ENCODE measurements at regions of chr3 and their contacts with region 1.

Region 1: GRCh38 chr3:190224863-190225692 is 97.2 kb downstream of the CLDN1 start:
- DNase-seq: no peak
- ATAC-seq: no peak

Region 2: GRCh38 chr3:190321789-190322603 is 96.9 kb after region 1 on chr3 and contains the start of gene CLDN1:
- intact Hi-C with region 1: loop called (anchors 5 to 10 kb)
- DNase-seq: peak; percentile 86
- ATAC-seq: peak; percentile 90 to 94
- total RNA-seq, gene CLDN1: 4.4 to 4.5 TPM

Region 3: DNA sequence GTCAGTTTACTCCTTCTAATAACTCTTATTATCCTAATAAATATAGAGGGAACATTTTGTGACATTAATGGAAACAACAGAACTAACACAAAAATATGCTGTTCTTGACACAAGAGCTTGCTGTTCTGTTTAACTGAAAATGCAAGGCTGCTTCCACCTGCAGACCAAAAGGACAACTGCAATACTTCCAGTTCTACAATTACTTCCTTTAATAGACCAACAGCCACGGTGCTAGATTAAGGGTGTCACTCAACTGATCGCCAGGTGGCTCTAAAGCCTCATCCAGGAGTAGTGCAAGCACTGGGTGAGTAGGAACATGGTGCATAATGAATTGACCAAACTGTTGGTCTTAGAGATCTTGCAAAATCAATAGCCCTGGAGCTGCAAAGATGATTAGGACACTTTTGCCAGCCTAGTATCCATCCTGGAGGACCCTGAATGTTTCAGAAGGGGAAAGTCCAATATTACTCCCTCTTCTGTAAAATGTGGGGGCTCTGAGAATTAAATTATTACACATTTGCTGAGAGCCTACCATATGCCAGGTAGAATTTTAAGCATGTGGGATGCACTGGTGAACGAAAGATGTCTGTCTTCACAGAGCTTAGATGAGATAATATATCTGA is 159.3 kb after region 1 on chr3:
- intact Hi-C with region 1: loop called in 1 of 2 experiments (anchors 10 kb)
- DNase-seq: no peak
- ATAC-seq: peak; percentile 71

Region 4: DNA sequence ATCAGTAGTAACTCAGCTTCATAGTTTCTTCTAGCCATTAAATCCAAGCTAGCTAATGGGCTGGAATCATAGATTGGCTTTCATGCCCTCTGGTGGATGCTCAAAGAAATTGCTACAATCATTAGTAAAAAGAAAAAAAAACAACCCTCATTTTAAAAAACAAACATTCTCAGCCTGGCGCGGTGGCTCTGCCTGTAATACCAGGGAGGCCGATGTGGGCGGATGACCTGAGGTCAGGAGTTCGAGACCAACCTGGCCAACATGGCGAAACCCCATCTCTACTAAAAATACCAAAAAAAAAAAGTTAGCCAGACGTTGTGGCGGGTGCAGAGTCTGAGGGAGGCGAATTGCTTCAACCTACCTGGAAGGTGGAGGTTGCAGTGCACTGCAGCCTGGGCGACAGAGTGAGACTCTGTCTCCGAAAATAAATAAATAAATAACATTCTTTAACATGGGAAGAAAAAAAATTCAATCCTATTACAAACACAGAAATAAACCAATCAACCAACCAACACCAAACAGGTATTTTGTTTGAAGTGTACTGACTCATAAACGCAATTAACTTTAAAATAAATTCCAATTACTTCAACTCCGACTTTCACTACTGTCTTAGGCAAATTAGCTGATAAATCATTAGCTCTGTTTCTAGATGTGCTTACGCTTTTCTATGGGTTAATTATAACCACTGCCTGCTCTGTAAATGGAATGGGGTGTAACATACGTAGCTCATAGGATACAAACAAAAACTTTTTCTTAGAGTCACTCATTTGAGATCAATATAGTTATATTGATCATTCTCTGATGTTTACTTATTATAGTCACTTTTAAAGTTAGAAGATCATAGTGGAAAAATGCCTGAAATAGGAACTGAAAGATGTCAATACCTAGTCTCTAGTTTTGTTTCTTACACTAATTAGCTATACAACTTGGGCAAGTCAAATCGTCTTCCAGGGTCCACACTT is 199.7 kb after region 1 on chr3:
- intact Hi-C with region 1: loop called in 1 of 2 experiments (anchors 10 kb)
- DNase-seq: peak; percentile 48
- ATAC-seq: peak; percentile 44 to 55

Measured in left cardiac atrium (tissue), 4 donors.